AG04449 (cell line): ENCODE measurements at regions of chr15 and their contacts with region 1.

Region 1: GRCh38 chr15:74127260-74127953 is 3.0 kb upstream of the ISLR2 start:
- DNase-seq: peak; percentile 5
- H3K4me3 ChIP-seq: peak overlapping the region; percentile 51
- CTCF ChIP-seq: peak; percentile 100

Region 2: GRCh38 chr15:74144153-74144775 is 16.9 kb after region 1 on chr15:
- CTCF ChIA-PET with region 1: no interaction called
- POLR2A ChIA-PET with region 1: no interaction called
- DNase-seq: no peak
- H3K4me3 ChIP-seq: no peak overlapping the region
- CTCF ChIP-seq: no peak

Region 3: GRCh38 chr15:74302821-74303359 is 175.5 kb after region 1 on chr15:
- CTCF ChIA-PET with region 1: interaction called, 219 read pairs
- POLR2A ChIA-PET with region 1: no interaction called
- DNase-seq: no peak
- H3K4me3 ChIP-seq: no peak overlapping the region
- CTCF ChIP-seq: peak; percentile 68